Activated CD4-positive, alpha-beta T cell treated with anti-CD3 and anti-CD28 coated beads for 36 hours (primary cell): ENCODE measurements at regions of chr11 and their contacts with region 1.

Region 1: DNA sequence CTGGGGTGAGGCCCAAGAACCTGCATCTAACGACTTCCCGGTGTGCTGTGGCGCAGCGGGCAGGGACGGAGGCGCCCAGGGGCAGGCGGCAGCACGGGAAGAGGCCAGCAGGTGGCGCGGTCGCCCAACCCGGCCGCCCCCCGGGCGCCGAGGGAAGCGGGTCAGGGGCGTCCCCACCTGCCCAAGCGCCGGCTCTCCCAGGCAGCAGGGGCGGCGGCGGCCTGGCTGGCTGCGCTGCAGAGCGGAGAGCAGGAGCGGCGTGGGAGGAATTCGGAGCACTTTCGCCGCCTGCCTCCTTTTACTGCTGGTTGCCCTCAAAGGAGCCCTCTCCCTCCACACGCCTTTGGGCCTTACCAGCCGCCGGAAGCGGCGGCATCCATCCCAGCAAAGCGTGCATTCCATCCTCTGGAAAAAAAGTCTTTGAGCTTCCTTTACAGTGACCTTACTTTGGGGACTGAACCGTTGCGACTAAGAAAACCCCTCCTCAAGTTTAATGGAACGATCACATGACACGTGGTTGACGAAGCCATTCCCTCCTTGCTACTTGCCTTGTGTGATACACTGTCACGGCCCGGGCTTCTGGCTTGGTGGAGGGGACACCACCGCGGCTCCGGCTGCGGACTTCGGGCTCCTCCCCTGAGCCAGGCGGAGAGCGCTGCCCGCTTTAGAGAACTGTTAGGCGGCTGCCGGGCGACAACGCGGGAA is 106.8 kb upstream of the CLMP start:
- DNase-seq: peak; percentile 90
- ATAC-seq: peak; percentile 75
- H3K4me3 Mint-ChIP-seq: peak overlapping the region; percentile 50
- H3K27ac Mint-ChIP-seq: peak overlapping the region; percentile 80
- H3K4me1 Mint-ChIP-seq: peaks cover 43% of the 10 kb centered on the region
- H3K27me3 Mint-ChIP-seq: no peaks in the 10 kb centered on the region

Region 2: GRCh38 chr11:123357961-123358841 is 56.4 kb after region 1 on chr11:
- CTCF ChIA-PET with region 1: interaction called, 13 read pairs
- POLR2A ChIA-PET with region 1: interaction called, 3 read pairs
- intact Hi-C with region 1: loop called (anchors 1 kb)
- DNase-seq: peak; percentile 71
- ATAC-seq: peak; percentile 77
- H3K4me3 Mint-ChIP-seq: peak overlapping the region; percentile 78
- H3K27ac Mint-ChIP-seq: peak overlapping the region; percentile 74
- H3K4me1 Mint-ChIP-seq: peaks cover 49% of the 10 kb centered on the region
- H3K27me3 Mint-ChIP-seq: peaks cover 38% of the 10 kb centered on the region

Region 3: GRCh38 chr11:123407130-123407995 is 105.5 kb after region 1 on chr11:
- CTCF ChIA-PET with region 1: interaction called, 26 read pairs
- POLR2A ChIA-PET with region 1: no interaction called
- intact Hi-C with region 1: loop called in 1 of 2 experiments (anchors 1 kb)
- DNase-seq: peak; percentile 79
- ATAC-seq: peak; percentile 74
- H3K4me3 Mint-ChIP-seq: peak overlapping the region; percentile 33
- H3K27ac Mint-ChIP-seq: peak overlapping the region; percentile 63
- H3K4me1 Mint-ChIP-seq: peaks cover 26% of the 10 kb centered on the region
- H3K27me3 Mint-ChIP-seq: peaks cover 5% of the 10 kb centered on the region

Region 4: DNA sequence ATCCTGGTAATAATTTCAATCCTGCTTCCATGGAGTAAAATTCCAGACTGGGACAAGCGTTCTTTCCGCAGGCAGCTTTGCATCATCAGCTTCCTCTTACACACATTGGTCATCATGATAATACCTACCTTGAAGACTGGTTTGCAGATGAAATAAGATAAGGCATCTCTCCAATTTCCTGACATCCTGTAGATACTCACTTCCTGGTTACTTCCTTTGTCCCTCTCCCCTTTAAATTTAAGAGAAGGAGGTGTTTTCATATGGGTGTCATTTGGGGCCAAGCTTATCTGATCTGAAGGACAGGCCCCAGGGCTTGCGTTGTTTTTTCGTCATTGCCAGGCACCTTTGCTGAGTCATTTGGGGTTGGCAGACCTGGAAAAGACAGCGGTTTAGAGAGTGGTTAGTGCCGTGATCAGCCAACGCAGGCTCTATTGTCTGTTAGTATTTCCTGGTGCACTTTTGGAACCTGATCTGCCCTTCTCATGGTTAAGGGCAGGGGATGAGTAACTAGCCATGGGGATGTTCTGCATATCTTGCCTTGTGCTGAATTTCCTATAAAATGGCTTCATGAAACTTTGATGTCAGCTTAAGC is 152.3 kb after region 1 on chr11:
- CTCF ChIA-PET with region 1: no interaction called
- POLR2A ChIA-PET with region 1: no interaction called
- intact Hi-C with region 1: loop called (anchors 1 kb)
- DNase-seq: peak; percentile 88
- ATAC-seq: peak; percentile 87
- H3K4me3 Mint-ChIP-seq: peak overlapping the region; percentile 69
- H3K27ac Mint-ChIP-seq: peak overlapping the region; percentile 94
- H3K4me1 Mint-ChIP-seq: peaks cover 78% of the 10 kb centered on the region
- H3K27me3 Mint-ChIP-seq: no peaks in the 10 kb centered on the region

Region 5: DNA sequence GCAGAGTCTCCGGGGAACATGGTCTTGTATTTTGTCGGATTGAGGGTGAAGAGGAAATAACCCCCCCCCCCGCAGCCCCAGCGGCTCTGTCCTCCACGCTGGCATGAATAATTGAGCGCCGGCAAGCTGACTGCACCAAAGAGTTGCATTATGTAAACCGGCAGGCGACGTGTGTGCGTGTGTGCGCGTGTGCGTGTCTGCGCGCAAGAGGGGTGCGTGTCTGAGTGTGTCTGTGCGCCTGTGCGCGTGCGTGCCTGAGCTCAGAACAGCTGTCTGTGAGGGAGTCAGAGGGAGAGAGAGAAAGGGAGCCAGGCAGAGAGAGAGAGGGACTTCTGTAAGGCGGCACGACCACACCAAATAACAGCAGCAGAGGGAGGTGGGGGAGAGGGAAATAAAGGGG is 258.2 kb after region 1 on chr11:
- CTCF ChIA-PET with region 1: no interaction called
- POLR2A ChIA-PET with region 1: no interaction called
- intact Hi-C with region 1: loop called (anchors 2 to 10 kb)
- DNase-seq: peak; percentile 77
- ATAC-seq: peak; percentile 89
- H3K4me3 Mint-ChIP-seq: peak overlapping the region; percentile 57
- H3K27ac Mint-ChIP-seq: peak overlapping the region; percentile 79
- H3K4me1 Mint-ChIP-seq: peaks cover 19% of the 10 kb centered on the region
- H3K27me3 Mint-ChIP-seq: peaks cover under 1% of the 10 kb centered on the region

Region 6: DNA sequence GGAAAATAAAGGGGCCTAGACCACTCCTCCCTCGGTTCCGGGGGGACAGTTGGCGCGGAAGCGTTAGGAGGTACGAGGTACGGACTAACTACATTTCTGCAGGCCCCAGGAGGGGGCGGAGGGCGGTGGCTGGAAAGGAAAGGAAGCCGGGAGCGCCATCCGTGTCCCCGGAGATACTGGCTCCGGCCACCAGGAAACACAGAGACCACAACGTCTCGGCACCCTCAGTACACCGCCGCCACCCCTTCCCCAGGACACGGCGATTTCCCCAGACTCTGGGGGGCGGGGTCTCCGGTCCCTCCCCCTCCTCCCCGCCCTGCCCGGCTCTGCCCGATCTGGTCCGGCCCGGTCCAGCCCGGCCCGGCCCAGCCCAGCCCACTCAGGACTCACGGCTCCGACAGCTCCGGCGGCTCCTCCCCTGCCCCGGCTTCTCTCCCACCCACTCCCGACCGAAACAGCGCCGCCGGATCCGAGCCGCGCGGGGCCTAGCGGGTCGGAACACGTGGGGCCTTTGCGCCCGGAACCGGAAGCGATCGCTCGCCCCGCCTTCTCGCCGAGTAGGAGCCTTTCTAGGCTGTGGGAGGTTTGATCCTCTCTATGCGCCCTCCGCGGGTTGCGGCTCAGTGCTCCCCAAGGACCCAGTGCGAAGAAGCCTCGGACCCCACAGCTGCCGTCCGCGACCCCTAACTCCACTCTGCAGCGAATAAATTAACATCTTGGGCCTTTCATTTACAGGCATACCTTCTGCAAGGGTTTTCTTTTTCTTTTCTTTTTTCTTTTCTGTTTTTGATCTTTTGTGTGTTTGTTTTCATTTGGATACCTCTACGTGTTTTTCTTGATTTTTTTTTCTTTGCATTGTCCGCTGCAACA is 439.5 kb after region 1 on chr11 and contains the start of gene ZNF202:
- CTCF ChIA-PET with region 1: no interaction called
- POLR2A ChIA-PET with region 1: no interaction called
- intact Hi-C with region 1: loop called in 1 of 2 experiments (anchors 5 kb)
- DNase-seq: peak; percentile 96
- ATAC-seq: peak; percentile 96
- H3K4me3 Mint-ChIP-seq: peak within 1 kb of the TSS; percentile 81
- H3K27ac Mint-ChIP-seq: peak within 1 kb of the TSS; percentile 97
- H3K4me1 Mint-ChIP-seq: peaks cover 31% of the 10 kb centered on the region
- H3K27me3 Mint-ChIP-seq: peaks cover 2% of the 10 kb centered on the region
- total RNA-seq, gene ZNF202: 9.5 to 12.1 TPM